ENCODE measurements at regions of chr15 and their contacts with region 1.

Region 1: DNA sequence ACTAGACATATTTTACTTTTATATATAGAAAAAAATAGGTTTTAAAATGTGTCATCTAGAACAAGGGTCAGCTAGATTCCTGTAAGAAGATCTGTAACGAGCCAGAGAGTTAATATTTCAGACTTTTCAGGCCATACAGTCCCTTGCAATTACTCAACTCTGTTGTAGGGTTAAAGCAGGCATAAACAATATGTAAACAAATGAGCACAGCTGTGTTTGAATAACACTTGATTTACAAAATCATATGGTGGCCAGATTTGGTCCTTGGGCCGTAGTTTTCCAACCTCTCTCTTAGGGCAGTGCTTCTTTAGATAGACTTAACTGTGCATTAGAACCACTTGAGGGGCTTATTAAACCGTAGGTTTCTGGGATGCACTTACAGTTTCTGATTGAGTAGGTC is 19.6 kb downstream of the LRRC57 start:
- DNase-seq: no peak
- CTCF ChIP-seq: no peak

Region 2: GRCh38 chr15:42133886-42134502 is 395.0 kb before region 1 on chr15:
- CTCF ChIA-PET with region 1: no interaction called
- POLR2A ChIA-PET with region 1: no interaction called
- DNase-seq: peak; percentile 64
- CTCF ChIP-seq: peak; percentile 81

Region 3: GRCh38 chr15:42149493-42150218 is 379.3 kb before region 1 on chr15:
- CTCF ChIA-PET with region 1: no interaction called
- POLR2A ChIA-PET with region 1: no interaction called
- DNase-seq: no peak
- CTCF ChIP-seq: no peak

Region 4: DNA sequence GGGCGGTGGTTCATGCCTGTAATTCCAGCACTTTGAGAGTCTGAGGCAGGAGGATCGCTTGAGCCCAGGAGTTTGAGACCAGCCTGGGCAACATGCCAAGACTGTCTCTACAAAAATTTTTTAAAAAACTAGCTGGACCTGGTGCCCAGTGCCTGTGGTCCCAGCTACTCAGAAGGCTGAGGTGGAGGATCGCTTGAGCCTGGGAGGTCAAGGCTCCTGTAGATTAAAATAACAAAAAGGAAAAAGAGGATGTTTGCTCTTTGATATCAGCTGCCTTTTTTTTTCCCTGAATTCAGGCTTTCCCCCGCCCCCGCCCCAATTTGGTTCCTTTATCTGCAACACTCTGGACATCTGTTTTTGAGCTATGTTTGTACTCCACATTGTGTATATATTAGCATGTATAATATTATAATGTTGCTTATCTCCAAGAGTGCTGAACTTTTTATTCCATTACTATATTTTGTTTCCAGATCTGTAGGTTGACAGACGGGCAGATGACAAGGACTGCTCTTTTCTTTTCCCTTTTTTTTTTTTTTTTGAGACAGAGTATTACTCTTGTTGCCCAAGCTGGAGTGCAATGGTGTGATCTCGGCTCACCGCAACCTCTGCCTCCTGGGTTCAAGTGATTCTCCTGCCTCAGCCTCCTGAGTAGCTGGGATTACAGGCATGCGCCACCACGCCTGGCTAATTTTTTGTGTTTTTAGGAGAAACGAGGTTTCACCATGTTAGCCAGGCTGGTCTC is 28.9 kb before region 1 on chr15:
- CTCF ChIA-PET with region 1: interaction called, 10 read pairs
- POLR2A ChIA-PET with region 1: no interaction called
- DNase-seq: no peak
- CTCF ChIP-seq: no peak

Region 5: GRCh38 chr15:42544853-42545629 is 16.1 kb after region 1 on chr15:
- CTCF ChIA-PET with region 1: interaction called, 19 read pairs
- POLR2A ChIA-PET with region 1: no interaction called
- DNase-seq: no peak
- CTCF ChIP-seq: no peak

Region 6: DNA sequence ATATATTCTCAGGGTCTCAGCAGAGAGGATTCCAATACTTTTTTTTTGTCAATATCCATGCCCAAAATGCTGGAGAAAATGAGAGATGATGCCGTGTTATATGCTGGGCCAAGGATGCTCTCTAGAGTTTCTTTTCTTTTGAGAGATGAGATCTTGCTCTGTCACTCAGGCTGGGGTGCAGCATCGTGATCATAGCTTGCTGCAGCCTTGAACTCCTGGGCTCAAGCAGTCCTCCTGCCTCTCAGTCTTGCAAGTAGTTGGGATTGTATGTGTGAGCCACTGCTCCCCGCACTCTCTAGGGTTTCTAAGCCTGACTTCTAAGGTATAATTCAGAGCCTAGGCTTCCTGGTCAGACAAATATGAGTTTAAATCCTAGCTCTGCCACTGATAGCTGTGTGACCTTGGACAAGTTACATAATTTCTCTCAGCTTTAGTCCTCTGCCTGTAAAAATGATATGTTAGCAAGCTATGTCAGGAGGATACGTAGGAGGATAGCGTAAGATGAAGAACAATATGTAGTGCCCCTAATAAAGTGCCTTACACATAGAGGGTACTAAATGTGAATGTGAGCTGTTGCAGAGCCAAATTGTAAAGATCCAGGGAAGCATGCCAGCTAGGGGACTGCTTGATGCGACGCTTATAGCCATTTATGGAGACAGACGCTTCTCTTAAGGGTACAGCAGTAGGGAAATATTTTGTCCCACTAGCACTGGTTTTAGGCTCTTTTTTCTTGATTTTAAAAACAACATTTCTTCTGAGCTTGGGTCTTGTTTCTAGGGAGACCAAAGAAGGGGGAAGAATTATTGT is 53.8 kb after region 1 on chr15:
- CTCF ChIA-PET with region 1: no interaction called
- POLR2A ChIA-PET with region 1: no interaction called
- DNase-seq: no peak
- CTCF ChIP-seq: no peak

Region 7: DNA sequence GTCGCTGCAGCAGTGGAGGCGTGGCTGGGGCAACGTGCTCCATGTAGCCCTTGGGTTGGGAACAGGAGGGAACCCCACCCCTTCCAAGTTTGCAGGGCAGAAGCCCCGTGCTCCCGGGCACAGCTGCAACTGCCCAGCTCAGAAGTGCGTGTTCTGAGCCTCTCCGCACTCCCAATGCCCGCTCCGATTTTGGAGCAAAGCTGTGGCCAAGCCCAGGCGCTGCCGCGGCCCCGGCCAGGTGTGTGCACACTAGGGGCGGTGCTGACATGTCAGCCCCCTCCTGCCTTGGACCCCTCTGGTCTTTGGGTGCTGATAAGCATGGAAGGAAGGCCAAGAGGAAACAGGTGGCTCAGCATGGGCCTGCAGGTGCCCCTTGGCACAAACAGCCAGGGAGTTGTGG is 479.2 kb after region 1 on chr15:
- CTCF ChIA-PET with region 1: no interaction called
- POLR2A ChIA-PET with region 1: no interaction called
- DNase-seq: no peak
- CTCF ChIP-seq: no peak

Measured in GM10248 (cell line).